ENCODE measurements at regions of chr16 and their contacts with region 1.

Region 1: DNA sequence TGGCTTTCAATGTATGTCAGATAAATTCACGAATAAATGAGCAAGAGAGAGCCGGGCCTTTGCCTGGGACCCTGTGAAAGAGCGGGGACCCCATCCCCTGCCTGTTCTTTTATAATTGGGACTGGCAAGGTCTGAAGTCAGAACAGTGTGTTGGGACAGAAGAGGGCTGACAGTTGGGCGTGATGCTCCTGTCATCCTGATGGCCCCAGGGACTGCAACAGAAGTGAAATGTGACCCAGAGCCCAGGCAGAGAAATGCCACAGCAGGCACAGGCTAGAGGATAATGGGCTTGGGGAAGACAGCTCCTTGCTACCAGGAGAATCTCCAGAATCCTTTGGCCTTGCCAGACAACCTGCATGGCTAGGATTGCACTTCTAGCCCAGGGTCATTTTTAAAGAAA is 37.9 kb downstream of the GSG1L start:
- DNase-seq: no peak
- ATAC-seq: no peak
- H3K4me3 ChIP-seq: no peak overlapping the region
- H3K4me3 Mint-ChIP-seq: no peak overlapping the region
- H3K27ac ChIP-seq: no peak overlapping the region
- H3K27ac Mint-ChIP-seq: no peak overlapping the region
- H3K4me1 ChIP-seq: no peaks in the 10 kb centered on the region
- H3K4me1 Mint-ChIP-seq: no peaks in the 10 kb centered on the region
- H3K27me3 ChIP-seq: no peaks in the 10 kb centered on the region
- H3K27me3 Mint-ChIP-seq: peaks cover 0 to 15% of the 10 kb centered on the region in 2 donors
- CTCF ChIP-seq: no peak

Region 2: GRCh38 chr16:27972500-27972899 is 53.1 kb before region 1 on chr16:
- intact Hi-C with region 1: loop called (anchors 10 kb)
- DNase-seq: peak in 1 of 2 donors; percentile 67
- ATAC-seq: peak in 1 of 3 donors; percentile 75
- H3K4me3 ChIP-seq: no peak overlapping the region
- H3K4me3 Mint-ChIP-seq: no peak overlapping the region
- H3K27ac ChIP-seq: no peak overlapping the region
- H3K27ac Mint-ChIP-seq: no peak overlapping the region
- H3K4me1 ChIP-seq: no peaks in the 10 kb centered on the region
- H3K4me1 Mint-ChIP-seq: no peaks in the 10 kb centered on the region
- H3K27me3 ChIP-seq: no peaks in the 10 kb centered on the region
- H3K27me3 Mint-ChIP-seq: peaks cover 8 to 11% of the 10 kb centered on the region in 2 donors
- CTCF ChIP-seq: peak; percentile 45

Measured in natural killer cell (primary cell).